ENCODE measurements at regions of chr7 and their contacts with region 1.

Region 1: GRCh38 chr7:90661290-90662151 is 65.4 kb downstream of the CDK14 start:
- DNase-seq: no peak
- ATAC-seq: peak; percentile 50
- H3K4me3 ChIP-seq: no peak overlapping the region
- H3K27ac ChIP-seq: peak overlapping the region; percentile 11; the same call in 1 of the 2 replicates
- H3K4me1 ChIP-seq: peaks cover 31% of the 10 kb centered on the region
- H3K27me3 ChIP-seq: no peaks in the 10 kb centered on the region
- CTCF ChIP-seq: no peak
- EP300 ChIP-seq: no peak
- POLR2A ChIP-seq: no peak
- RAD21 ChIP-seq: no peak

Region 2: GRCh38 chr7:90645784-90646183 is 15.7 kb before region 1 on chr7:
- CTCF ChIA-PET with region 1: interaction called, 8 read pairs
- POLR2A ChIA-PET with region 1: no interaction called
- RAD21 ChIA-PET with region 1: interaction called, 6 read pairs
- SMC1A ChIA-PET with region 1: interaction called, 14 read pairs
- in situ Hi-C with region 1: no loop called
- intact Hi-C with region 1: no loop called
- DNase-seq: no peak
- ATAC-seq: peak; percentile 90
- H3K4me3 ChIP-seq: no peak overlapping the region
- H3K27ac ChIP-seq: no peak overlapping the region
- H3K4me1 ChIP-seq: peaks cover 5% of the 10 kb centered on the region; the same call in 1 of the 2 replicates
- H3K27me3 ChIP-seq: no peaks in the 10 kb centered on the region
- CTCF ChIP-seq: no peak
- EP300 ChIP-seq: no peak
- POLR2A ChIP-seq: no peak
- RAD21 ChIP-seq: no peak

Region 3: DNA sequence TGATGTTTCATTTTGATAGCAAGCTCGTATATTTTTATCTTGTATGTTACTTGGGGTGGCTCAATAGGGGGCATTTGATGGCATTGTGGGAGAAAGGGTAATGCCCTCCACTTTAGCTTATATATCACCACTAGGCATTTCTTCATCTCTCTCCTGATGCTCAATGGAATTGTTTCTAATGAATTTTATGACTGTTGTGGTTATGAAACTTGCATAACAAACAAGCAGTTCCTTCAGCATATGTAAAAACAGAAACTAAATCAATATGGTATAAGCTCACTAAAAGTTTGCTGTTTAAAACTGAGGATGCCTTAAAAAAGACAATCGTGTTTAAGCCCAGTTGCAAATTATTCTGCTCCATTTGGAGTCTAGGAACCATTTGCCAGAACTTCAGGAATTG is 10.1 kb after region 1 on chr7:
- CTCF ChIA-PET with region 1: interaction called, 13 read pairs
- POLR2A ChIA-PET with region 1: interaction called, 6 read pairs
- RAD21 ChIA-PET with region 1: no interaction called
- SMC1A ChIA-PET with region 1: interaction called, 14 read pairs
- in situ Hi-C with region 1: no loop called
- intact Hi-C with region 1: no loop called
- DNase-seq: no peak
- ATAC-seq: no peak
- H3K4me3 ChIP-seq: no peak overlapping the region
- H3K27ac ChIP-seq: no peak overlapping the region
- H3K4me1 ChIP-seq: peaks cover 6% of the 10 kb centered on the region; the same call in 1 of the 2 replicates
- H3K27me3 ChIP-seq: no peaks in the 10 kb centered on the region
- CTCF ChIP-seq: no peak
- EP300 ChIP-seq: no peak
- POLR2A ChIP-seq: no peak
- RAD21 ChIP-seq: no peak

Measured in GM12878 (cell line).